ENCODE measurements at regions of chr10 and their contacts with region 1.

Region 1: DNA sequence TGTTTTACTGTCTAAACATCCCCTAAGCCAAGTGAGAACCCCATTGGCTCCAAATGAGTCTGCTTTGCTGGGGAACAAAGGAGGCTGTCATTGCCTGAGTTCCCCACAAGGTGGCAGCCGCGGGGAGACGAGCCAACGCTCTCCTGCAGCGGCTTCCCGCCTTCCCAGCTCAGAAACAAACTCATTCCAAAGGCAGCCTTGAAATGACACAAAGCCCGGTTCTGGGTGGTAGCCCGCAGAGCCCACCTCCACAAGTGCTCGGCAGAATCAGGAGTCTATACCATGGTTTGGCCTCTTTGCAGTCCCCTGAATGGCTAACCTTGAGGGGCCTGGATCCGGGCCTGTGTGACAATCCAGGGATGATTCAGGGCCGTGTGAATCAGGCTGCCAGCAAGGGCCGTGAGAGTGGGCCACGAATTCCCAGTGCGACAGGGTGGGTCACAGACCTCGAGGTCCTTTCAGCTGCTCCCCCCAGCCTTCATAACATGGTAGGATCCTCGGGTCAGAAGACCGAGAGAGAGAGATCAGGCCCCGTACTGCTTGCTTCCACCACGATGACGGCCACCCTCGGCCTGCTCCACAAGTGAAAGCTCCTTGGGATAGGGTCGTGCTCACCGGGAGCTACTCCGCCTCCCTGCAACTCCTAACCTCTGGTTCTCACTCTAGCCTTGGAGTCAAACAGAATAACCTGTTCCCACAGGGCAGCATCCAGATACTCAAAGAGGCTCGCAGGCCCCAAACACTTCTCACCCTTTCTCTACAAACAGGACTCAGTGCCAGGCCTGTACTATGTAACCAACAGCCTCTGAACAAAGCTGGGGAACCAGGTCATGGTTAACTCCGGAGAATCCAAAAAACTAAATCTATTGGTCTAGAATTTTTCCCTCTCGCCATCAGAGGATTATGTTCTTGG is 79.6 kb downstream of the DLG5 start:
- DNase-seq: peak; percentile 37
- H3K4me3 Mint-ChIP-seq: no peak overlapping the region
- H3K27ac Mint-ChIP-seq: no peak overlapping the region
- H3K4me1 Mint-ChIP-seq: peaks cover 5% of the 10 kb centered on the region
- H3K27me3 Mint-ChIP-seq: no peaks in the 10 kb centered on the region

Region 2: GRCh38 chr10:77970869-77971803 is 124.2 kb after region 1 on chr10:
- intact Hi-C with region 1: loop called (anchors 2 kb)
- DNase-seq: no peak
- H3K4me3 Mint-ChIP-seq: no peak overlapping the region
- H3K27ac Mint-ChIP-seq: peak overlapping the region; percentile 52
- H3K4me1 Mint-ChIP-seq: peaks cover 10% of the 10 kb centered on the region
- H3K27me3 Mint-ChIP-seq: no peaks in the 10 kb centered on the region

Measured in activated T-helper 1 cell treated with anti-CD3 and anti-CD28 coated beads, Interleukin-12 subunit alpha, Interleukin-12 subunit beta, Interleukin-2, Interleukin-4 antibody, amounts not matched to agents 30 ng/mL and 10 ng/mL and 1 ng/mL, durations not matched to agents 14 hours and 24 hours and 36 hours (primary cell).